CD14-positive monocyte (primary cell): ENCODE measurements at regions of chr3 and their contacts with region 1.

Region 1: DNA sequence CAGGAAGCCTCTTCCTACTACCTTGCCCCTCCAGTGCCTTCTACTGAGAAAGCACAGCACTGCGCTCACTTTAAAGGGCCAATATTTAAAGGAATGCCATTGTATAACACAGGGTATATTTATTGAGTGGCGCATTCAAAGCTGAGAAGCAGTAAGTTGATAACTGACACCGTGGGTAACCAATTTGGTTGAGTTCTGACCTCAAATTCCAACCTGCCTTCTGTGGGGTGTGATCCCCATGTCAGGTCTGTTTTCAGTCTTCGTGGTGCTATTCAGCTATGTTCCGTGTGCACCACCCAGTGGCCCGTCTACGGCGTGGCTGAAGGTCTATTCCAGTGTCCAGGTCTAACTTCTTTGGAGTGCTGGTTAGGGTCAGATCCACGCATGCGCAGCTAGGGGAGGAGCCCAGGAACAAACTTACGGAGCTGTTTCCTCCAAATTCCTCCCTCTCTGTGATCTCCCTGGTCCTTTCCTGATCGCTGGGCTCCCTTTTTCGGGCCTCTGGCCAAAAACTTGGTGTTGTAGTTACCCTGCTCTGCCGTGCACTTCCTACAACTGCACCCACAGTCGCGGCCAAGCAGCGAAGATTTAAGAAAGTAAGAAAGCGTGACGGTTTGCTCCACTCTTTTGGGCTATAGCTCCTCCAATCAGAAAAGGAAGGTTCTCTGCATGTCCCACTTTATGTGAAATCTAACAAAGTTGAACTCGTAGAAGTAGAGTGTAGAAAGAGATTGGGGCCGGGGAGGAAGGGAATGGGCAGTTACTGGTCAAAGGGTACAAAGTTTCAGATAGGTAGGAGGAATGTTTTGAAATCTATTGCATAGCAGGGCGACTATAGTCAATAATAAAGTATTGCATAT is 7.7 kb downstream of the LRRC2 start:
- DNase-seq: peak; percentile 76 to 85 (median 78)
- H3K4me3 ChIP-seq: peak overlapping the region; percentile 28 to 75 (median 41)
- H3K4me3 Mint-ChIP-seq: peak overlapping the region; percentile 76 to 93
- H3K27ac ChIP-seq: peak overlapping the region in 1 of 2 donors; percentile 49
- H3K27ac Mint-ChIP-seq: peak overlapping the region in 4 of 7 donors; percentile 38 to 77 (median 71)
- H3K4me1 ChIP-seq: peaks cover 4 to 7% of the 10 kb centered on the region in 2 donors
- H3K4me1 Mint-ChIP-seq: peaks cover 11% of the 10 kb centered on the region
- H3K27me3 ChIP-seq: no peaks in the 10 kb centered on the region
- H3K27me3 Mint-ChIP-seq: peaks cover 8 to 16% (median 12%) of the 10 kb centered on the region in 3 donors
- CTCF ChIP-seq: peak; percentile 81

Region 2: DNA sequence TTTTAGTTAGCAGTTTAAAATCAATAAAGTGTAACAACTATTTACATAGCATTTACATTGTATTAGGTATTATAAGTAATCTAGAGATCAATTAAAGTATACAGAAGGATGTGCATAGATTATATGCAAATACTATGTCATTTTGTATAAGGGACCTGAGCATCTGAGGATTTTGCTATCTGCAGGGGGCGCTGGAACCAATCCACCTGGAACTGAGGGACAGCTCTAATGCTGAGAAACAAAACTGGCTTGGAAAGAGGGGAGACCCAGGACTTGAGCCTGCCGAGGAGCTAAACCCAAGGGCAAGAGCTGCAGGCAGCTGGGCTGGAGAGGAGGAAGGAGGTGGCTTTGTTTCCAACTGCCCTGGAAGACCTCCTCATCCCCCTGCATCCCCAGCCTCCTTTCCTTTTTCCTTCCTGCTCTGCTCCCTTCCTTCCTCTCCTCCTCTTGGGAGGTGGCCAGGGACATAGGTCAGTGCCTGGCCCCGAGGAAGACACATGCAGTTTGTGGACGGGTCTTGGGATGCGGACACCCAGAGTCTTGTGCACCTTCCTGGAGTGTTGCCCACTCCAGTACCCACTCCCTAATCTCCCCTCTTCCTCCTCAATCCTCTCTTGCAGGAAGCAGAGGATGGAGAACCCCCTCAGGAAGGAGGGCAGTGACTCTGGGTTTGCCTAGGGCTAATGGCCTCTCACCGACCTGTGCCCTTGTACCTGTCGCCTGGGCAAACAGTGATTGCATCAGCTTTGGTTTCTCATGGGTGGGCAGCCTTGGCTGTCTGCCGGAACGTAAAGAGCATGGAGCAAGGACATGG is 61.5 kb before region 1 on chr3:
- intact Hi-C with region 1: loop called in 1 of 2 experiments (anchors 10 kb)
- DNase-seq: no peak
- H3K4me3 ChIP-seq: no peak overlapping the region
- H3K4me3 Mint-ChIP-seq: no peak overlapping the region
- H3K27ac ChIP-seq: no peak overlapping the region
- H3K27ac Mint-ChIP-seq: no peak overlapping the region
- H3K4me1 ChIP-seq: no peaks in the 10 kb centered on the region
- H3K4me1 Mint-ChIP-seq: peaks cover 15% of the 10 kb centered on the region
- H3K27me3 ChIP-seq: no peaks in the 10 kb centered on the region
- H3K27me3 Mint-ChIP-seq: peaks cover 0 to 2% (median 2%) of the 10 kb centered on the region in 3 donors
- CTCF ChIP-seq: peak; percentile 20